ENCODE measurements at regions of chr14 and their contacts with region 1.

Region 1: DNA sequence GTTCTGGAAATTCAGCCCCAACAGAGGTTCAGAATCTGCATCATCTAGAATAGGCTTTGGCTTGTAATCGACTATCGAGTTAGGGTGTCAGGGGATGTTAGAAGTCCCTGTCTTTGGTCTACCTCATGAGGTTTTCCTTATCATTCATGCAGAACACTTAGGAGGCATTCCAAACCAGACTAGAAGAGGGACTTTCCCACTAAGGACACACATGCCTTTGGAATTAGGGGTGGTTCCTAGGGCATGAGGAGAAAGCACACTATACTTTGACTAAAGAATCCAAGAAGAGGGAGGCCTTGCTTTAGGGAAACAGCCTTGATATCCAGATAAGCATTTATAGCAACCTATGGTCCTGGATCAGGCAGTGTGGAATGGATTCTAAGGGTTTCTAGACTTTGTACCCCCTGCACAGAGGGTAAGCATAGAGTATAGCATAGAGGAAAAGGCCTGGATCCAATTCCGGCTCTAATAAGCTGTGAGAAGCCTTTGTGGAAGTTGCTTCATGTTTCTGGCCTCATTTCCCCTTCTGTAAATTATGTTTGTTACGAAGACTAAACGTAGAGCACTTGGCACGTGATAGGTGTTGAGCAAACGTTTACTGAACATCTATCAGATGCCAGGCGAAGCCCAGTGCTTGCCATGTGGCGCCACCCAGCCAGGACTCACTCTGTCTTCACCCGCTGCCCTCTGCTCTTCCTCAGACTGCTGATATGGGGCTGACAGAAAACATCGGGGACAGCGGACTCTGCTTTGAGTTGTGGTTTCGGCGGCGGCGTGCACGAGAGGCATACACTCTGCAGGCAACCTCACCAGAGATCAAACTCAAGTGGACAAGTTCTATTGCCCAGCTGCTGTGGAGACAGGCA is 13.2 kb downstream of the ZNF219 start:
- DNase-seq: peak; percentile 51 to 67
- ATAC-seq: peak; percentile 27 to 88 (median 64)
- H3K4me3 ChIP-seq: no peak overlapping the region
- H3K27ac ChIP-seq: peak overlapping the region in 9 of 10 donors; percentile 11 to 82 (median 30)
- H3K4me1 ChIP-seq: peaks cover 0 to 44% (median 7%) of the 10 kb centered on the region in 9 donors
- H3K27me3 ChIP-seq: no peaks in the 10 kb centered on the region
- CTCF ChIP-seq: no peak

Region 2: GRCh38 chr14:20907214-20907613 is 178.0 kb before region 1 on chr14:
- intact Hi-C with region 1: no loop called
- DNase-seq: no peak
- ATAC-seq: no peak
- H3K4me3 ChIP-seq: no peak overlapping the region
- H3K27ac ChIP-seq: no peak overlapping the region
- H3K4me1 ChIP-seq: peaks cover 0 to 5% (median 0%) of the 10 kb centered on the region in 9 donors
- H3K27me3 ChIP-seq: no peaks in the 10 kb centered on the region
- CTCF ChIP-seq: no peak

Region 3: GRCh38 chr14:21071225-21072030 is 13.8 kb before region 1 on chr14:
- intact Hi-C with region 1: loop called in 1 of 10 experiments (anchors 2 kb)
- DNase-seq: peak; percentile 88 to 91
- ATAC-seq: peak; percentile 69 to 81 (median 74)
- H3K4me3 ChIP-seq: peak overlapping the region; percentile 61 to 86 (median 78)
- H3K27ac ChIP-seq: peak overlapping the region; percentile 64 to 98 (median 95)
- H3K4me1 ChIP-seq: peaks cover 6 to 44% (median 34%) of the 10 kb centered on the region in 9 donors
- H3K27me3 ChIP-seq: peaks cover 0 to 17% (median 0%) of the 10 kb centered on the region in 7 donors
- CTCF ChIP-seq: peak in 2 of 9 donors; percentile 5 to 15

Measured in heart right ventricle (tissue), 16 donors.